Posterior vena cava (tissue), 2 donors: ENCODE measurements at regions of chr21 and their contacts with region 1.

Region 1: GRCh38 chr21:30447056-30447455 is 7.0 kb downstream of the KRTAP15-1 start:
- DNase-seq: no peak

Region 2: DNA sequence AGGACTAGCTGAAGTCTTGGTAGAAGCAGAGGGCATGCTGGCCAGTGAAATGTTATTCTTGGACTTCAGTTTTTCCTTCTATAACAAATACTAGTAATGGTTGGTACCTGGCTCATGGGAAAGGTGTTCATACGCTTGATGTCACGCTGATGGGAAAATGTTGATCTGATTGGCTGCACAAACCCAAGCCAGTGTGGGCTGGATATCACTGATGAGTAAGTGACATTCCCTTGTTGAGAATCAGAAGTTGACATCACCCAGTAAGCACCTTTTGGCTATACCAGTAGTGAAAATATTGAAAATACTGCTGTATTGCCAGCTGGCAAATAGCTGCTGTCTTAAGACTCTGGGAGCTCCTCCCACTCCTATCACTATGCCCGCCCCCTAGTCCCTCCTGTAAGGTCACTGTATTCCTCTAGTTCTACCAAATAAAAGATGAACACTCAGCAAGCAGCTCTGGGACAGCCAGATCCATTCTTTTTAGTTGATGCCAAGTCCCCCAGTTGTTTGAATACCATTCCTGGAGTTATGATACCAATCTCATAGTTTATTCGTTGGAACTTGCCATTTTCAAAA is 675.5 kb before region 1 on chr21:
- intact Hi-C with region 1: loop called in 1 of 2 experiments (anchors 5 kb)
- DNase-seq: no peak